A673 (cell line): ENCODE measurements at regions of chr1 and their contacts with region 1.

Region 1: GRCh38 chr1:6889875-6890480 is 104.7 kb downstream of the CAMTA1 start:
- DNase-seq: peak; percentile 66
- H3K4me3 ChIP-seq: no peak overlapping the region
- H3K27ac ChIP-seq: no peak overlapping the region
- H3K4me1 ChIP-seq: no peaks in the 10 kb centered on the region
- H3K27me3 ChIP-seq: no peaks in the 10 kb centered on the region
- CTCF ChIP-seq: peak; percentile 82

Region 2: GRCh38 chr1:6727535-6727934 is 162.4 kb before region 1 on chr1:
- CTCF ChIA-PET with region 1: no interaction called
- POLR2A ChIA-PET with region 1: no interaction called
- intact Hi-C with region 1: loop called (anchors 10 kb)
- DNase-seq: peak; percentile 76
- H3K4me3 ChIP-seq: no peak overlapping the region
- H3K27ac ChIP-seq: no peak overlapping the region
- H3K4me1 ChIP-seq: no peaks in the 10 kb centered on the region
- H3K27me3 ChIP-seq: peaks cover 11% of the 10 kb centered on the region
- CTCF ChIP-seq: peak; percentile 96

Region 3: DNA sequence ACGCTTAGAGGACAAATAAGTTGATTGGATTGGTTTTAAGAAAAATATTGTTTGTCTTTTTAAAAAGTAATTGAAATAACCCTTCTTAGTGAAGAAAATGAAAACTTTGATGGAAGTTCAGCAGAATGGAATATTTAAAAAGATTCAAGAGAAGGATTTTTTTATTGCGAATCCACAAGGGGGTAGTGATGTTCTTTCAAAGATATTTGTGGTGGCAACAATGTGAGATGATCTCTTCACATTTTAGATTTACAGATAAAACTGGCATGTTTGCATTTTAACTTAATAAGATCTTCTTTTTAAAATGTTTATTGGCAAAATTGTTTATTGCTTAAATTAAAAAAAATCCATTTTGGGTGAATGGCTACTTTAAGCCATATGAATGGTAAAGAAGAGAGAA is 95.8 kb before region 1 on chr1:
- CTCF ChIA-PET with region 1: no interaction called
- POLR2A ChIA-PET with region 1: no interaction called
- intact Hi-C with region 1: loop called (anchors 2 kb)
- DNase-seq: peak; percentile 55
- H3K4me3 ChIP-seq: no peak overlapping the region
- H3K27ac ChIP-seq: no peak overlapping the region
- H3K4me1 ChIP-seq: peaks cover 6% of the 10 kb centered on the region
- H3K27me3 ChIP-seq: no peaks in the 10 kb centered on the region
- CTCF ChIP-seq: peak; percentile 55; the same call in 1 of the 2 replicates

Region 4: DNA sequence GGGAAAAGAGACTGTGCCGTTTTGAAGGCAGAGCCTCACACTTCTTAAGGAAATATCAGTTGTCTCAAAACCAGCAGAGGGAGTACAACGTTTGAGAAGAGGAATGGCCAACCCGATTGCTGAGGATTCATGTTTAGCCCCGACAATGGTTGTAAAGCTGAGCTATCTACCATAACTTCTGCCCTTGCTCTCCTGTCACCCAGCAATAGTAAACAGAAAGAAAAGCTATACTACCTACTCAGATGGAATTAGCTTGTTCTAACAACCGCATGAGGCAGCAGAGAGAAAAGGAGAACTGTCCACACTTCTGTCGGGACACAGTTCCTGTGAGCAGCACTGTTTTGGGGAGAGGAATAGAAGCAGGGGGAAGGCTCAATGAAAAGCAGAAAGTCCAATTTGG is 1519.1 kb after region 1 on chr1:
- CTCF ChIA-PET with region 1: no interaction called
- POLR2A ChIA-PET with region 1: no interaction called
- intact Hi-C with region 1: no loop called
- DNase-seq: peak; percentile 81
- H3K4me3 ChIP-seq: peak overlapping the region; percentile 23
- H3K27ac ChIP-seq: peak overlapping the region; percentile 90
- H3K4me1 ChIP-seq: peaks cover 88% of the 10 kb centered on the region
- H3K27me3 ChIP-seq: no peaks in the 10 kb centered on the region
- CTCF ChIP-seq: peak; percentile 63